Activated naive CD4-positive, alpha-beta T cell treated with anti-CD3 and anti-CD28 coated beads for 36 hours (primary cell): ENCODE measurements at regions of chr16 and their contacts with region 1.

Region 1: DNA sequence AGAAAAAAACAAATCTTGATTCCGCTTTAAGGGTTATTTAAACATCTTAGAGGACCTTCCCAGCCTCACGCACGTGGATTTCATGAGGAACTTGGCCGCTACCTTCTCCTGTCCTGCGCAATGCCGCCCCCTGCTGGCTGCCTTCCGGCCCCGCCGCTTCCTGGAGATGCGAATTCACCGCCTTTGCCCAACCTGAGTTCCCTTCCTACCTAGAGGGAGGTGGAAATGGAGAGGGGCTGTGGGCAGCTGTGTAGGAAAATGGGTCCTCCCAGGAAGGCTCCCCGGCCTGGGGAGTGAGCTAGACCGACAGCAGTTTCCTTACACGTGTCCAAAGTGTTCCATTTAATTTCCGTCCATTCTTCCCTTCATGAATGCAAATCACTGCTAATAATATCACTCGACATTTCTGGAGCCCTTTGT is 1.0 kb upstream of the ABCC12 start:
- DNase-seq: peak; percentile 91
- H3K4me3 Mint-ChIP-seq: no peak overlapping the region
- H3K27ac Mint-ChIP-seq: no peak overlapping the region
- H3K4me1 Mint-ChIP-seq: peaks cover 26% of the 10 kb centered on the region
- H3K27me3 Mint-ChIP-seq: peaks cover 26% of the 10 kb centered on the region

Region 2: DNA sequence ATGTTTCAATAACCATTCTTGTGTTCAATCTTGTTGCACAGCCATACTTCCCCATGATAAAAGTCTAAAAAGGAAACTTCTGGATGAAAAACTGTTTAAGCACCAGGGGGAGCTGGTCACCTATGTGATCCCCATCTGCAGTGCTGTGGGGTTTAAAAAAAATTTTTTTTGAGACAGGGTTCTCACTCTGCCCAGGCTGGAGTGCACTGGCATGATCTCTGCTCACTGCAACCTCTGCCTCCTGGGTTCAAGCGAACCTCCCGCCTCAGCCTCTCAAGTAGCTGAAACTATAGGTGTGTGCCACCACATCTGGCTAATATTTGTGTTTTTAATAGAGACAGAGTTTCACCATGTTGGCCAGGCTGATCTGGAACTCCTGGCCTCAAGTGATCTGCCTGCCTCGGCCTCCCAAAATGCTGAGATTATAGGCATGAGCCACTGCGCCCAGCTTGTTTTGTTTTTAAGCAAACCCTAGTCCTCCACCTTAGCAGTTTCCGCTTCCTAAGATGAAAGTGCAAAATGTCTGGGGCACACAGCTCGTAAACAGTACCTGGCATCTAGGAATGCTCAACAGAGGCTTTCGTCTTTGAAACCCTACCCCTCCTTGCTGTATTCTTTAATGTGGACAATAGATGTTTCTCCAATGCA is 1208.8 kb before region 1 on chr16:
- CTCF ChIA-PET with region 1: interaction called, 3 read pairs
- intact Hi-C with region 1: loop called (anchors 2 kb)
- DNase-seq: peak; percentile 63
- H3K4me3 Mint-ChIP-seq: no peak overlapping the region
- H3K27ac Mint-ChIP-seq: no peak overlapping the region
- H3K4me1 Mint-ChIP-seq: peaks cover 14% of the 10 kb centered on the region
- H3K27me3 Mint-ChIP-seq: no peaks in the 10 kb centered on the region

Region 3: DNA sequence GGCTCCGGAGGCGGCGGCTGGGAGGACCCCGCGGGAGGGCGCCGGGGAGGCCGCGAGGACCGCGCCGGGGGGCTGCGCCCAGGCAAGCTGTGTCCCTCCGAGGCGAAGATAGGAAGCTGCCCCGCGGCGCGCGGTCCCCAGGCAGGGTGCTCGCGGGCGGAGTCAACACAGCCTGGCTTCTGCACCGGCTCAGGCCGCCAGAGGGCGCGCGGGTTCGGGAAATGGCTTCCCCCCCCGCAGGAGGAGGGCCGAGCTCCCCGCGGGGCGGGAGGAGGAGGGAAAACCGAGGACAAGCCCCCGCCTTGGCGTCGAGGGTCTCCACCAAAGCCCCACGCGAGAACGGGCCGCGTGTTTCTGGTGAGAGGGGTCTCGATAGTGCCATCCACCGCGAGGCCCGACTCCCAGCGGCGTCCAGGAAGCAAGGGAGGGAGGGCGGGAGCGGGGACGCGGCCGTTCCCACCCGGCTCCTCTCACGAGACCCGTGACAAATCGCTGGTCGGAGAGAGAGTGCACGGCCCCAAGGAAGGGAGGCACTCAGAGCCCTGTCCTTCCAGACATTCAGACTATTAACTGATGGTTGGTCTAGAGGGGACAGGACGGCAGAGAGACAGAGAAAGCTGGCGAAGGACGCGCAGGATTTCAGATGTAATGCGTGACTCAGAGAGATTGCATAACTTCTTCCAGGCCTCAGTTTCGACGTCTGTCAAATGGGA is 1118.9 kb before region 1 on chr16:
- CTCF ChIA-PET with region 1: interaction called, 6 read pairs
- intact Hi-C with region 1: loop called (anchors 2 kb)
- DNase-seq: peak; percentile 91
- H3K4me3 Mint-ChIP-seq: peak overlapping the region; percentile 74
- H3K27ac Mint-ChIP-seq: no peak overlapping the region
- H3K4me1 Mint-ChIP-seq: peaks cover 8% of the 10 kb centered on the region
- H3K27me3 Mint-ChIP-seq: peaks cover 10% of the 10 kb centered on the region

Region 4: DNA sequence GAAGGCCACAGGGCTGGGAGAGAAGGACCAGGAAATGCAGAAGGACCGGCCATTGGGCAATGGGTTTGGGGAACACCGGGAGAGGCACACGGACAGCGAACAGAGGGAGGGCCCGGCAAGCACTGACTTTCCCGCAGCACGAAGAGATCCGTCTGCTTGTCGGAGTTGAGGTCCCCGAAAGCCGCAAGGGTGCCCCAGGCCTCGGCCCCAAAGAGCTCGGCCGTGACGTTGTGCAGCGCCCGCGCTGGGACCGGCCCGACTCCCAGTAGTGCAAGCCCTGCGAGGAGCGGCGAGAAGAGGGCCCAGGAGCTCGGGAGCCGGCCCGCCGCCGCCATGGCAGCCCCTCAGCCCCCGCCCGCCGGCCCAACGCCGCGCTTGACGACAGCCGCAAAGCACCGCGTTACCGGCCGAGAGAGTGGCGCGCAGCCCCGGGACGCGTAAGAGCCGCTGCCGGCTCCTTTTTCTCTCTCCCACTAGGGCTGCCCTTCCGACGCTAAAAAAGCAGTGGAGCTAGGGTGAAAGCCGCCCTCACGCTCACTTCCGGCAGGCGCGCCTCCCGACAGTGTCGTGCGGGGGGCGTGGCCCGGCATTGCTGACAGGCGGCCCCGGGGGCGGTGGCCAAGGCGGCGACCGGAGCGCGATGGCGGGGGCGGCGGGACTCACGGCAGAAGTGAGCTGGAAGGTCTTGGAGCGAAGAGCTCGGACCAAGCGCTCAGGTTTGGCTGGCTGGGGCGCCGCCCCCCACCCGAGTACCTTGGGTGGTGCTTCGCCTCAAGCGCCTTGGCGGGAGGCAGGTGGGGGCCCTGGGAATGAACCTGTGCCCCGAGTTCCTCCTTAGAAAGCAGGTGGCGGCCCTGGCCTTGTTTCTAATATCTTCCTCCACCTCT is 695.8 kb before region 1 on chr16 and contains the starts of genes ITFG1 and PHKB:
- CTCF ChIA-PET with region 1: no interaction called
- intact Hi-C with region 1: loop called (anchors 2 kb)
- DNase-seq: peak; percentile 93
- H3K4me3 Mint-ChIP-seq: peak within 1 kb of the TSS; percentile 92
- H3K27ac Mint-ChIP-seq: peak within 1 kb of the TSS; percentile 88
- H3K4me1 Mint-ChIP-seq: peaks cover 58% of the 10 kb centered on the region
- H3K27me3 Mint-ChIP-seq: no peaks in the 10 kb centered on the region
- total RNA-seq, gene ITFG1: 17.6 to 18.3 TPM
- total RNA-seq, gene PHKB: 22.5 to 25.3 TPM

Region 5: GRCh38 chr16:47873434-47873833 is 283.4 kb before region 1 on chr16:
- CTCF ChIA-PET with region 1: no interaction called
- intact Hi-C with region 1: loop called (anchors 10 kb)
- DNase-seq: peak; percentile 7
- H3K4me3 Mint-ChIP-seq: no peak overlapping the region
- H3K27ac Mint-ChIP-seq: no peak overlapping the region
- H3K4me1 Mint-ChIP-seq: no peaks in the 10 kb centered on the region
- H3K27me3 Mint-ChIP-seq: no peaks in the 10 kb centered on the region

Region 6: GRCh38 chr16:48041861-48042480 is 114.8 kb before region 1 on chr16:
- CTCF ChIA-PET with region 1: no interaction called
- intact Hi-C with region 1: no loop called
- DNase-seq: no peak
- H3K4me3 Mint-ChIP-seq: no peak overlapping the region
- H3K27ac Mint-ChIP-seq: no peak overlapping the region
- H3K4me1 Mint-ChIP-seq: no peaks in the 10 kb centered on the region
- H3K27me3 Mint-ChIP-seq: peaks cover 5% of the 10 kb centered on the region

Region 7: DNA sequence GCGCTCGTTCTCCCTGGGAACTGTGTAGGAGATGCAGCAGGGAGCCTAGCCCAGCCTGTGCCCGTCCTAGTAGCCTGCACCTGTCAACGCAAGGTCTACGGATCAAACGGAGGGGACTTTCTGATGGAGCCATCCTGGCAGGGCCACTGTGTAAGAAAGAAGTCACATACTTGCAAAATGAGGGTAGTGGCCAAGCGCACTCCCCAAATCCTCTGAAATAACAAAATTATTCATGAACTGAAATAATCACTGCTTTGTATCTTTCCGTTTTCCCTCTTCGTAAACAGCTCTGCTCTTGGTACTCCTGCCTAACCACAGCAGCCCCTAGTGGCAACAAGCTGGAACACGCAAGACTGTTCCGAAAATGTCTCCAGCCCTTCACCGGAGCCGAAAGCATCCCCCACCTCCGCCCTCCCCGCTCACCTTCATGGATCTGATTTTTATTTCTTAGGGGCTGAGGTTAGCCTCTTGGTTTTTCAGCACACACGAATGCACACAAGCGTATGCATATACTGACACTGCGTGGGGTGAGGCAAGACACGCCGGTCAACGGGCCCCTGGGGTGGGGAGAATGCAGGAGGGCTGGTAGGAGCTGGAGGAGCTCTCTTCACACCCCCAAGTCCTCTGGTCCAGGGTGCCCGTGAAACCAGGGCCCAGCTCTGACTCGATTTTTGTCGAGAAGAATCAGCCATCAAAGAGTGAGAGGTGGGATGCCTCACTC is 101.8 kb before region 1 on chr16:
- CTCF ChIA-PET with region 1: no interaction called
- intact Hi-C with region 1: loop called (anchors 2 kb)
- DNase-seq: peak; percentile 55
- H3K4me3 Mint-ChIP-seq: no peak overlapping the region
- H3K27ac Mint-ChIP-seq: no peak overlapping the region
- H3K4me1 Mint-ChIP-seq: peaks cover 3% of the 10 kb centered on the region
- H3K27me3 Mint-ChIP-seq: peaks cover 29% of the 10 kb centered on the region

Region 8: DNA sequence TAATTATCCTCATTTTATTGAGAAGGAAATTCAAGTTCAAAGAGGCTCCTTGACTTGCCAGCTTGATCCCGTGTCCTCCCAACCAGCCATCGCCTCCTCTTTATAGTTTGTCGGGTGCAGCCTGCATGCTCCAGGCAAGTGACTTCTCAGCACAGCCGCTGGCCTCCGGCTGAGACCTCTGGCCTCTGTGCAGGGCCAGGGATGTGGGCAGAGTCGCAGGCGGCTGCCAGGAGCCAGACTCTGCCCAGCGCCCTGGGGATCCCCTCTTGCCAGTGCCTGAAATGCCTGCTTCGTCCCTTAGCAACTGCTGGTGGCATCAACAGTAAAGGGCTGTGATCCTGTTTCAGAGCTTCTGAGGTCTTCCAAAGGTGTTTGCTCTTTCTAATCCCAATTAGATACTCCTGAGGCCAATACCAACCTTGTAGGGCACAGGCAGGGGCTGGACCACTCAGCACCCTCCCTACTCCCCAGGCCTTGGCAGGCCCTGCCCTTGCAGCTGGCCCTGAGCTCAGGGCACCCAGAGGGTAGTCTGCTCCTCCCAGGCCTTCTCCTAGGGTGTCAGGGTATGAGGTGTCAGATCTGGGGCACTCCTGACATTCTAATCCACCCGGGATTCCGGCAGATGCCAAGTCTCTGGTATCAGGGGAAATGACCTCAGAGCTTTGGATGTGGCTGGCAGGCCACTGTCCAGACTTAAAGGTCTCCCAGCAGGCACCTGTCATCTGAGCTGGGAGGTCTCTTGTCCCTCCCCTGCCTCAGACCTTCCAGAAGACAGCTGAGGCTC is 296.4 kb after region 1 on chr16:
- CTCF ChIA-PET with region 1: no interaction called
- intact Hi-C with region 1: loop called (anchors 1 kb)
- DNase-seq: no peak
- H3K4me3 Mint-ChIP-seq: no peak overlapping the region
- H3K27ac Mint-ChIP-seq: no peak overlapping the region
- H3K4me1 Mint-ChIP-seq: peaks cover 12% of the 10 kb centered on the region
- H3K27me3 Mint-ChIP-seq: peaks cover 8% of the 10 kb centered on the region